Caco-2 (cell line): ENCODE measurements at regions of chr20 and their contacts with region 1.

Region 1: DNA sequence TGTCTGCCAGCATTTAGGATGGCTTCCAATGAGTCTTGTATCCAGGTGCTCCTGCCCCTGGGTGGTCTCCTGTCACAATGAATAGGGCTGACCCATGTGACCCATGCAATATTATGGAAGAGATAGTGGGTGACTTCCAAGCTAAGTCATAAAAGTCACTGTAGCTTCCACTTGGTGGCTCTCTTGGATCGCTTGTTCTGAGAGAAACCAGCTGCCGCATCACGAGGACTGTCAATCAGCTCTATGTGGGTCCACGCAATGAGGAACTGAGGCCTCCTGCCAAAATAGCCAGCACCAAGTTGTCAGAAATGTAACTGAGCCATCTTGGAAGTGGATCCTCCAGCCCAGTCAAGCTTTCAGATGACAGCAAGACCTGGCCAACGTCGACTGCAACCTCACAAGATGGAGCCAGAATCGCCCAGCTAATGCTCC is 14.9 kb upstream of the MATN4 start:
- DNase-seq: peak; percentile 84 to 86
- H3K4me3 ChIP-seq: no peak overlapping the region
- H3K4me3 Mint-ChIP-seq: no peak overlapping the region
- H3K27ac Mint-ChIP-seq: peak overlapping the region; percentile 3
- H3K4me1 ChIP-seq: peaks cover 8% of the 10 kb centered on the region; the same call in 1 of the 2 replicates
- H3K4me1 Mint-ChIP-seq: no peaks in the 10 kb centered on the region
- H3K27me3 ChIP-seq: no peaks in the 10 kb centered on the region
- H3K27me3 Mint-ChIP-seq: no peaks in the 10 kb centered on the region
- CTCF ChIP-seq: peak; percentile 55 to 79

Region 2: DNA sequence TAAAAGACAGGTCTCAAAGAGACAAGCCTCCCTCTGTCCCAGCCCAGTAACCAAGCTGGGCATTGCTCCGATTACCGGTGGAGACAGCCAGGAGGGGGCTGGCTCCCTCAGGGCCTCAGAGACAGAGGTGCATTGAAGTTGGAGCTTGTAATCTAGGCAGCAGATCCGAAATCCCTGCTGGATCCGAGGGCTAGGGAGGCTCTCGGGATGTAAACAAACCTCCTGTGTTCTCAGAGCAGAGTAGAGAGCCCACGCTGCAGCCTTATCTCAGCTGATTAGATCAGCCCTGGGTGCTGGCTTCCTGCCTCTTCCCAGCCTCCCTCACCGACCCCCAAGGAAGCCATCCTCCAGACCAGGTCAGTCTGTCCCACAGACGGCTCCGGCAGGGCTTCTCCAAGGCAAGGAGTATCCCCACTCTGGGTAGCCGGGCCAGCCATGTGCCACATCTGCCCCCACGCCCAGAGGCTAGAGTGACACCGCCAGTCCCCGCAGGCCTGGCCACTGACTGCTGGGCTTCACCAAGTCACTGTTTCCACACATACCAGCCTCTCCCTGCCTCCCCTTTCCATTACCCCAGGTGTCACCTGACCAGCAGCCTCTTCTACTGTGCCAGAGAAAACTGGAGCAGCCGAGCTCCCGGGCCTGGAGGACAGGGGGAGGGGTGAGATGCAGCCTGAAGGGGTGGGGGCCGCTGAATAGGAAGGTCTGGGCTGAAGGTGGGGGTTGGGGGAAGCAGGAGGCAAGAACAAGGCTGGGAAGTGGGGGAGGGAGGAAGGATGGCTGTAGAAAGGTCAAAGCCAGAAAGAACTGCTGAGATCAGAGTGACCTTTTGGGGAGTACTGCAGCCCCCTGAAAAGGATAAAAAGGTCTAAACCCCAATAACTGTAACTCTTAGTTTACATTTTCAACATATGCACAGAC is 19.2 kb after region 1 on chr20:
- CTCF ChIA-PET with region 1: interaction called, 44 read pairs
- POLR2A ChIA-PET with region 1: interaction called, 21 read pairs
- intact Hi-C with region 1: loop called (anchors 1 kb)
- DNase-seq: peak; percentile 90 to 93
- H3K4me3 ChIP-seq: peak overlapping the region; percentile 24
- H3K4me3 Mint-ChIP-seq: peak overlapping the region; percentile 97
- H3K27ac Mint-ChIP-seq: peak overlapping the region; percentile 77
- H3K4me1 ChIP-seq: peaks cover 99% of the 10 kb centered on the region
- H3K4me1 Mint-ChIP-seq: peaks cover 95% of the 10 kb centered on the region
- H3K27me3 ChIP-seq: no peaks in the 10 kb centered on the region
- H3K27me3 Mint-ChIP-seq: no peaks in the 10 kb centered on the region
- CTCF ChIP-seq: no peak

Region 3: DNA sequence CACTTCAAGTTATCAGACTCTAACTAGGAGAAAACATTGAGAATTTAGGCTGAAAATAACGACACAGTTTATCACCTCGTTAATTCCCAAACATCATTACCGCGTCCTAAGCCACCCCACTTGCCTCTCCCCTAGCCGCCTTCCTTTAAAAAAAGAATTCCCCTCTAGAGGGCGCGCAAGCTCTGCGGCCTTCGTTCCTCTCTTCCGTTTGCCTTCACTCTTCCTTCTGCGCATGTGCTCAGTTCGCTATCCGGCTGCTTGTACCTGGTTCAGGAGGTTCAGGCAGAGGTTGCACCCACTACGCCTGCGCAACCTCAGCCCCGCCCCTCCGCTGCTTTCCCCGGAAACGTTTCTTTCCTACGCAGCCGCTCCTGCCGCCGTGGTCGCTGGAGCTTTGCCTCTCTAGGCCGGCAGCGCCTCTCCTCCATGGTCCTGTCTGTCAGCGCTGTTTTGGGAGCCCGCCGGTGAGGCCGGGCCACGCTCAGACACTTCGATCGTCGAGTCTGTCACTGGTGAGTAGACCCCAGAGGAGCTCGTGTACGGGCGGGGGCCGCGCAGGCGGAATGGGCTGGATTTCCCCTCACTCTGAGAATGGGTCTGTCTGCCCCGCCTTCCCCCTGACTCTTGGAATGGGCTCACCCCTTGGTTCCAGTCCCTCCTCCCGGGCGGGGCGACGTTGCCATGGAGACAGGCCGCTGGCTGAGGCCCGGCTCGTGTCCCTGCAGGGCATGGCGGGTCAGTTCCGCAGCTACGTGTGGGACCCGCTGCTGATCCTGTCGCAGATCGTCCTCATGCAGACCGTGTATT is 40.0 kb after region 1 on chr20 and contains the start of gene SYS1:
- CTCF ChIA-PET with region 1: interaction called, 134 read pairs
- POLR2A ChIA-PET with region 1: interaction called, 7 read pairs
- intact Hi-C with region 1: loop called (anchors 1 kb)
- DNase-seq: peak; percentile 100
- H3K4me3 ChIP-seq: peak within 1 kb of the TSS; percentile 93
- H3K4me3 Mint-ChIP-seq: peak within 1 kb of the TSS; percentile 87
- H3K27ac Mint-ChIP-seq: peak within 1 kb of the TSS; percentile 91
- H3K4me1 ChIP-seq: peaks cover 46% of the 10 kb centered on the region
- H3K4me1 Mint-ChIP-seq: peaks cover 46% of the 10 kb centered on the region
- H3K27me3 ChIP-seq: no peaks in the 10 kb centered on the region
- H3K27me3 Mint-ChIP-seq: no peaks in the 10 kb centered on the region
- CTCF ChIP-seq: peak; percentile 98
- total RNA-seq, gene SYS1: 62.1 and 67.1 TPM in 2 replicates

Region 4: DNA sequence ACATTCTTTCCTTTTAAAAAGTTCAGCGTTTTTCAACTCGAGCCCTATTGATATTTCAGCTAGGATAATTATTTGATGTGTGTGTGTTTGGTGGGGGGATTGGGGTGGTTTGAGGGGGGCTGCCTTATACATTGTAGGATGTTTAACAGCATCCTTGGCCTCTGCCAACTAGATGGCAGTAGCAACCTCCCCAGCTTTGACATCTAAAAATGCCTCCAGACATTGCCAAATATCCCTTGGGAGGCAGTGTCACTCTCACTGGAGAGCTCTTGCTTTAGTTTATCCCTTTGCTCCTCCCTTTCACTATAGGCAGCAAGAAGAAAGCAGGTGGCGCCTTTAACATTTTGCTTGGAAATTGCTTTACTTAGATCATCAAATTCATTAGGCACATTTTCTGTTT is 69.8 kb after region 1 on chr20:
- CTCF ChIA-PET with region 1: interaction called, 11 read pairs
- POLR2A ChIA-PET with region 1: interaction called, 3 read pairs
- intact Hi-C with region 1: no loop called
- DNase-seq: peak in 1 of 2 experiments; percentile 46
- H3K4me3 ChIP-seq: no peak overlapping the region
- H3K4me3 Mint-ChIP-seq: no peak overlapping the region
- H3K27ac Mint-ChIP-seq: no peak overlapping the region
- H3K4me1 ChIP-seq: no peaks in the 10 kb centered on the region
- H3K4me1 Mint-ChIP-seq: no peaks in the 10 kb centered on the region
- H3K27me3 ChIP-seq: no peaks in the 10 kb centered on the region
- H3K27me3 Mint-ChIP-seq: peaks cover 2% of the 10 kb centered on the region
- CTCF ChIP-seq: no peak

Region 5: DNA sequence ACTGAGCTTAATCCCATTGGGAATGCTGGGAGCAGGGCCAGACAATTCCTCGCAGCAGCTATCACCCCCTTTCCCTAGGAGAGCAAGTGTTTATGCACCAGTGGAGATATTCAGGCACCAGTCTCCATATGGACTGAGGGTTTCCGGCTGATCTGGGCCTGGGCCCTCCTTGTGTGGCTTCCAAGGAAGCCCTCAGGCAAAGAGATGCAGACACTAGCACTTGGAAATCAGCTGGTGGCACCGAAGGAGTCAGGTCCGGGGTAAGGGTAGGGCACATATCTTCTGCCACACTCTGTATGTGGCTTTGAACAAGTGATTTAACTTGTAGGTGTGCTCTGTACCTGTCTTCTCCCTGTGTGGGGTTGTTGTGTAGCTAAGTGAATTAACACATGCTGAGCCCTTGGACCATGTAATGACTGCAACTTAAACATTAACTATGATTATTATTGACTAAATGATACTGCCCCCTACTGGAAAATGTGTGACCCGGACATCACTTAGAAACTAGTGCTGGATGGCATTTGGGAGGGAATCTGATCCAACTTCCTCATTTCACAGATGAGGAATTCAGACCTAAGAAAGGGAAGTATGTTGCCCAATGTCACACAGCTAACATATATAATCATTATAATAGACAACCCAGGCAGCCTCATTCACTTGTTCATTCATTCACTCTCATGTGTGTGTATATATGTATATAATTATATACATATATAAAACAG is 127.3 kb after region 1 on chr20:
- CTCF ChIA-PET with region 1: interaction called, 33 read pairs
- POLR2A ChIA-PET with region 1: interaction called, 4 read pairs
- intact Hi-C with region 1: no loop called
- DNase-seq: peak in 1 of 2 experiments; percentile 61
- H3K4me3 ChIP-seq: no peak overlapping the region
- H3K4me3 Mint-ChIP-seq: no peak overlapping the region
- H3K27ac Mint-ChIP-seq: no peak overlapping the region
- H3K4me1 ChIP-seq: peaks cover 14% of the 10 kb centered on the region
- H3K4me1 Mint-ChIP-seq: peaks cover 12% of the 10 kb centered on the region
- H3K27me3 ChIP-seq: no peaks in the 10 kb centered on the region
- H3K27me3 Mint-ChIP-seq: no peaks in the 10 kb centered on the region
- CTCF ChIP-seq: peak; percentile 64 to 82

Region 6: GRCh38 chr20:45470262-45470931 is 147.4 kb after region 1 on chr20:
- CTCF ChIA-PET with region 1: interaction called, 15 read pairs
- POLR2A ChIA-PET with region 1: interaction called, 4 read pairs
- intact Hi-C with region 1: loop called (anchors 1 kb)
- DNase-seq: peak; percentile 61 to 65
- H3K4me3 ChIP-seq: peak overlapping the region; percentile 44
- H3K4me3 Mint-ChIP-seq: peak overlapping the region; percentile 77
- H3K27ac Mint-ChIP-seq: no peak overlapping the region
- H3K4me1 ChIP-seq: peaks cover 18% of the 10 kb centered on the region; the same call in 1 of the 2 replicates
- H3K4me1 Mint-ChIP-seq: peaks cover 8% of the 10 kb centered on the region
- H3K27me3 ChIP-seq: peaks cover 9% of the 10 kb centered on the region
- H3K27me3 Mint-ChIP-seq: peaks cover 15% of the 10 kb centered on the region
- CTCF ChIP-seq: no peak